Ascending aorta (tissue), 2 donors: ENCODE measurements at regions of chr20 and their contacts with region 1.

Region 1: DNA sequence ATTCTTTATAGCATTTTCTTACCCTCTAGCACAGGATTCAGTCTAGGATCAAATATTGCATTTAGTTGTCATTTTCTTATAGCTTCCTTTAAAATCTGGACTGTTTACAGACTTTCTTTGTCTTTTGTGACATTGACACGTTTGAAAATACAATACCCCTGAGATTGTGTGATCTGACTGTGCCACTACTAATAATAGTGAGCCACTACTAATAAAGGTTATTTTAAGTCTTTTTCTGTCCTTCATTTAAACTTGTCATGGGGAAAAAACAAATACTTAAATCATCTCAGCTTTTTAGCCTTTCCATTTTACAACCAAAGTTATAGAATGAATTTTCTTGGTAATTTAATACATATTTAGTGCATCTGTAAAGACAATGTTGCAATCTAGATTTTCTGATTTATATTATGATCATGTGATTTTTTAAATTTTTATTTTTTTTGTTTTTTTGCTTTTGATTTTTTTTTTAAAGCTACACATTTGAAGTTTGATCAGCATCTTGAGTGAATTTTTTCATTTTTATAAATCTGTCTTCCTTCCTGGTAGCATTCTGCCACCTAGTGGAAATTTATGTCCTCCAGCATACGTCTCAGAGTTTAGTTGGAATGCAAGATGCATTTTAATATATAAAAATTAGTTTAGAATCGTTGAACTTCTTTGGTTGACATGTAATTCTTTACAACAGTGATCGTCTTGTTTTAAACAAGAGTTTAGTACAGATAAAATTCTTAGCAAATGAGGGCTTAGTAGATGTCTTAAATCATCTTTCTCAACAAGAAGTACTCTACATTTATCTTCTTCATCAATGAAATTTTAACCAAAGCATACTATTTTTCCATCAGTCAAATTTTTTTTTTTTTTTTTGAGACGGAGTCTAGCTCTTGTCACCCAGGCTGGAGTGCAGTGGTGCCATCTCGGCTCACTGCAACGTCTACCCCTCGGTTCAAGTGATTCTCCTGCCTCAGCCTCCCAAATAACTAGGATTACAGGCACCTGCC is 119.4 kb downstream of the NCOA3 start:
- DNase-seq: no peak
- H3K4me3 ChIP-seq: no peak overlapping the region
- H3K27ac ChIP-seq: no peak overlapping the region
- H3K4me1 ChIP-seq: no peaks in the 10 kb centered on the region
- H3K27me3 ChIP-seq: no peaks in the 10 kb centered on the region
- CTCF ChIP-seq: peak; percentile 64 to 87 (median 81)

Region 2: GRCh38 chr20:46752728-46753127 is 868.4 kb before region 1 on chr20:
- intact Hi-C with region 1: loop called (anchors 5 kb)
- DNase-seq: peak in 1 of 2 donors; percentile 78
- H3K4me3 ChIP-seq: peak overlapping the region in 1 of 2 donors; percentile 7
- H3K27ac ChIP-seq: no peak overlapping the region
- H3K4me1 ChIP-seq: no peaks in the 10 kb centered on the region
- H3K27me3 ChIP-seq: no peaks in the 10 kb centered on the region
- CTCF ChIP-seq: peak; percentile 39 to 80 (median 75)

Region 3: DNA sequence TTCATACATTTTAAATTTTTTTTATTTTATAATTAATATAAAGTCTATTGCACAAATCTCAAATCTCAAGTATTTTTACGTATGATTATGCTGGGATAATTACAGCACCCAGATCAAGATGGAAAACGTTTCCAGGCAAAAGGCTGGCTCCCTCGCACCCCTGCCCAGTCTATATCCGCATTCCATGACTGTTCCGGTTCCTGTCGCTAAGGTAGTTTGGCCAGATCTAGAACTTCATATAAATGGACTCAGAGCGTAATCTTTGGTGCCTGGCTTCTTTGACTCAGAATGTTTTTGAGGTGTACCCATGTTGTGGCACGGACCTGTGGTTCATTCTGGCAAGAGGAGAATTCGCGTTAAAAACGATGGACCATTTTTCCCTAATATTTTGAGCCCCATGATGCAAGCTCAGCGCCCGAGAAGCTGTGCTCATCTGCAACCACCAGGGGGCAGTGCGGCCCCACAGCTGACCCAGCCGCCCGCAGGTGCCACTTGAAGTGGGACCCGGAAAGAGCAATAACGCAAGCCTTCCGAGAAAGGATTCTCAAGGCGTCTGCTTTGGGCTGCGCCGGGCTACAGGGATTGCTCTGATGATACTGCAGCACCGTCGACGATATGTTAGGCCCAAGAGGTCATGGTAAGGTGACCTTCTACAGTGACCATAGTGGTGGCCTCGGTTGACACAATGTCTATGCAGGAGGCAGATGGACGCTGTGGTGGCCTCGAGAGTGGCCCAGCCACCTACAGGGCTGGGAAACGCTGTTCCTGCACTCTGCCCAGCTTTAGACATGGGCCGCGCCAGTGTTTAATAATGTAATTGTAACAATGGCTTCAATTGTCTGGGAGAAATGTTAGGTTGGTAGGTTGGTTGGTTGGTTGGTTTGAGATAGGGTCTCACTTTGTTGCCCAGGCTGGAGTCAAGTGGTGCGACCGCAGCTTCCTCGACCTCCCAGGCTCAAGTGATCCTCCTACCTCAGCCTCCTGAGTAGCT is 424.7 kb before region 1 on chr20:
- intact Hi-C with region 1: loop called (anchors 1 kb)
- DNase-seq: peak; percentile 14 to 81
- H3K4me3 ChIP-seq: peak overlapping the region in 1 of 2 donors; percentile 33
- H3K27ac ChIP-seq: no peak overlapping the region
- H3K4me1 ChIP-seq: peaks cover 0 to 5% of the 10 kb centered on the region in 2 donors
- H3K27me3 ChIP-seq: no peaks in the 10 kb centered on the region
- CTCF ChIP-seq: peak; percentile 95 to 98 (median 96)

Region 4: GRCh38 chr20:47665221-47665991 is 44.3 kb after region 1 on chr20:
- intact Hi-C with region 1: no loop called
- DNase-seq: peak in 1 of 2 donors; percentile 56
- H3K4me3 ChIP-seq: no peak overlapping the region
- H3K27ac ChIP-seq: no peak overlapping the region
- H3K4me1 ChIP-seq: peaks cover 0 to 9% of the 10 kb centered on the region in 2 donors
- H3K27me3 ChIP-seq: no peaks in the 10 kb centered on the region
- CTCF ChIP-seq: no peak

Region 5: GRCh38 chr20:47725248-47725973 is 104.3 kb after region 1 on chr20:
- intact Hi-C with region 1: no loop called
- DNase-seq: peak in 1 of 2 donors; percentile 82
- H3K4me3 ChIP-seq: no peak overlapping the region
- H3K27ac ChIP-seq: no peak overlapping the region
- H3K4me1 ChIP-seq: peaks cover 0 to 8% of the 10 kb centered on the region in 2 donors
- H3K27me3 ChIP-seq: no peaks in the 10 kb centered on the region
- CTCF ChIP-seq: peak; percentile 67 to 88 (median 84)

Region 6: DNA sequence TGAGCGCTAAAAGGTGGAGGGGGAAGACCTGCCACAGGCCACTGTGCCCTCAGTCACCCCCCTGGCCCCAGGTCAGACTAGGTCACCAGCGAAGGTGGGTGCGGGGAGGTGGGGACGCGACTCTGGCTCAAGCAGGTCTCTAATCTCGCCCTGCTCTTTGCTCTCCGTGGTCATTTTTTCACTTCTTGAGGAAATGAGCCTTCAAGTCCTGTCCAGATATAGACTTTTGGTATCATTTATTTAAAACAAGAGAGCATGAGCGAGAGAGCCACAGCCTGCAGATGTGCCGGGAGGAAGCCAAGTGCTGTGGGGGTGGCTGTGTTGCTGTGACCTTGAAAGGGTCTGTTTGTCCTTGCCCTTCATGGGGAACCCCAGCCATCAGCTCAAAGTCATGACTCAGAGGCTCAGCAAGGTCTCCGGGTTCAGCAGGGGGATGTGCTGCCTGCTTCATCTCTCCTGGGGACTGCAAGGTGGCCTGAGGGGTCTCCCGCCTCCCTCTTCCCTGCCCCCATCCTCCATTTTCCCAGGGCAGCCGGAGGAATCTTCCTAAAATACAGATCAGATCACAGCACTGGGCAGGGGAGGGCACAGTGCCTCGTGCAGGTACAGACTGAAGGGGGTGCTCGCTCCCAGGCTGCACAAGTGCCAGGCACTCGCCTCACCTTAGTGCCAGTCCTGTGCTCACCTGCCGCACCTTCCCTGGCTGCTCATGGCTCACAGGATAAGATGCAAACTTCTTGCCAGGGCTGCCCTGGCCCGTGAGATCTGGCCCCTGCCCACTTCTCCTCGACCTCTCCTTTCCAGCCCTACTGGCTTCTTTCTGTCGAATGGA is 137.6 kb after region 1 on chr20:
- intact Hi-C with region 1: no loop called
- DNase-seq: no peak
- H3K4me3 ChIP-seq: no peak overlapping the region
- H3K27ac ChIP-seq: no peak overlapping the region
- H3K4me1 ChIP-seq: no peaks in the 10 kb centered on the region
- H3K27me3 ChIP-seq: no peaks in the 10 kb centered on the region
- CTCF ChIP-seq: no peak